ENCODE measurements at regions of chrX and their contacts with region 1.

Region 1: GRCh38 chrX:150982788-150983520 is at the start of gene HMGB3:
- DNase-seq: peak; percentile 92 to 95 (median 94)
- ATAC-seq: peak; percentile 100
- H3K4me3 ChIP-seq: peak within 1 kb of the TSS; percentile 73
- H3K27ac ChIP-seq: peak within 1 kb of the TSS; percentile 82
- H3K4me1 ChIP-seq: peaks cover 7 to 11% of the 10 kb centered on the region in 2 experiments; a peak in 4 of 5 replicates
- H3K27me3 ChIP-seq: no peaks in the 10 kb centered on the region
- CTCF ChIP-seq: no peak
- EP300 ChIP-seq: no peak
- POLR2A ChIP-seq: peak; percentile 52
- RAD21 ChIP-seq: no peak
- polyA plus RNA-seq, gene HMGB3: 134 to 138 TPM

Region 2: DNA sequence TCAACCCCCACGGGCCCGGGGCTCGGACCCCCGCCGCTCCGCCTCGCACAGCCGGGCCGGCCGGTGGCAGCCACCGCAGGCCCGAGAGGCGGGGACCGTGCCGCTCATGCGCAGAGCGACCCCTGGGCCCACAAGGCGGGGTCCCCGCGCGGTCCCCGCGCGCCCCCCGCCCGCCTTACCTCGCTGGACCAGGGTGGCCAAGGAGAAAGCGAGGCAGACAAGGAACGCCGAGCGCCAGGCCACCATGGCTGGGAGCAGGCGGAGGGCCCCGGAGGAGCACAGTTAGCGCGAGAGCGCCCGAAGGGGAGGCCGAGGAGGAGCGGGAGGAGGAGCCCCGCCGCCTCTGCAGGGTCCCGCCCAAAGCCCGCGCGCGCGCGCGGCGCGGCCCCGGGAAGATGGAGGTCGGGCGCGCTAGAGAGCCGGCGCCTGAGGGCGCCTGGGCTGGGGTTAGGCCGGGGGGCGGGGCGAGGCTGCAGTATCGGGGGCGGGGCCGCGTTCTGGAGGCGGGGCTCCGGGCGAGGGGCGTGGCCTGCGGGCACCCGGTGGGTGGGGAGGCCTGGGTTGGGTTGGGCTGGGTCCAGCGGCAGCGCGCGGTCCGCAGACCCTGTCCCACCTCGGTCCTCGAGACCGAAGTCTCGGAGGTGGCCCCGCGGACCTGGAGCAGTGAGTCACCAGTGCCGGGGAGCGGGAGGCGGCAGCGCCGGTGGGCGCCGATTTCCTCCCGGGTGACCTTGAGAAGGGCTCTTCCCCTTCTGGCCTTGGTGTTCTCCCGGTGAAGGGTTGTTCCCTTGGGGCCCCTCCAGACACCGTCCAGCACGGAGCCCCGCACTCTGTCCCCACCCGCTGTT is 84.4 kb before region 1 on chrX and contains the start of gene CD99L2:
- CTCF ChIA-PET with region 1: no interaction called
- POLR2A ChIA-PET with region 1: no interaction called
- in situ Hi-C with region 1: no loop called
- intact Hi-C with region 1: loop called (anchors 5 kb)
- DNase-seq: peak; percentile 92 to 94 (median 94)
- ATAC-seq: peak; percentile 97
- H3K4me3 ChIP-seq: peak within 1 kb of the TSS; percentile 78
- H3K27ac ChIP-seq: peak within 1 kb of the TSS; percentile 85
- H3K4me1 ChIP-seq: peaks cover 14 to 25% of the 10 kb centered on the region in 2 experiments
- H3K27me3 ChIP-seq: no peaks in the 10 kb centered on the region
- CTCF ChIP-seq: no peak
- EP300 ChIP-seq: no peak
- POLR2A ChIP-seq: peak; percentile 78
- RAD21 ChIP-seq: no peak
- polyA plus RNA-seq, gene CD99L2: 0.76 to 2.8 TPM

Region 3: GRCh38 chrX:151000861-151001331 is 17.9 kb after region 1 on chrX:
- CTCF ChIA-PET with region 1: no interaction called
- POLR2A ChIA-PET with region 1: no interaction called
- in situ Hi-C with region 1: no loop called
- intact Hi-C with region 1: no loop called
- DNase-seq: no peak
- ATAC-seq: no peak
- H3K4me3 ChIP-seq: no peak overlapping the region
- H3K27ac ChIP-seq: no peak overlapping the region
- H3K4me1 ChIP-seq: no peaks in the 10 kb centered on the region
- H3K27me3 ChIP-seq: peaks cover 0 to 5% of the 10 kb centered on the region in 2 experiments; a peak in 2 of 5 replicates
- CTCF ChIP-seq: no peak
- EP300 ChIP-seq: no peak
- POLR2A ChIP-seq: no peak
- RAD21 ChIP-seq: no peak

Measured in K562 (cell line).